ENCODE measurements at regions of chr1 and their contacts with region 1.

Region 1: DNA sequence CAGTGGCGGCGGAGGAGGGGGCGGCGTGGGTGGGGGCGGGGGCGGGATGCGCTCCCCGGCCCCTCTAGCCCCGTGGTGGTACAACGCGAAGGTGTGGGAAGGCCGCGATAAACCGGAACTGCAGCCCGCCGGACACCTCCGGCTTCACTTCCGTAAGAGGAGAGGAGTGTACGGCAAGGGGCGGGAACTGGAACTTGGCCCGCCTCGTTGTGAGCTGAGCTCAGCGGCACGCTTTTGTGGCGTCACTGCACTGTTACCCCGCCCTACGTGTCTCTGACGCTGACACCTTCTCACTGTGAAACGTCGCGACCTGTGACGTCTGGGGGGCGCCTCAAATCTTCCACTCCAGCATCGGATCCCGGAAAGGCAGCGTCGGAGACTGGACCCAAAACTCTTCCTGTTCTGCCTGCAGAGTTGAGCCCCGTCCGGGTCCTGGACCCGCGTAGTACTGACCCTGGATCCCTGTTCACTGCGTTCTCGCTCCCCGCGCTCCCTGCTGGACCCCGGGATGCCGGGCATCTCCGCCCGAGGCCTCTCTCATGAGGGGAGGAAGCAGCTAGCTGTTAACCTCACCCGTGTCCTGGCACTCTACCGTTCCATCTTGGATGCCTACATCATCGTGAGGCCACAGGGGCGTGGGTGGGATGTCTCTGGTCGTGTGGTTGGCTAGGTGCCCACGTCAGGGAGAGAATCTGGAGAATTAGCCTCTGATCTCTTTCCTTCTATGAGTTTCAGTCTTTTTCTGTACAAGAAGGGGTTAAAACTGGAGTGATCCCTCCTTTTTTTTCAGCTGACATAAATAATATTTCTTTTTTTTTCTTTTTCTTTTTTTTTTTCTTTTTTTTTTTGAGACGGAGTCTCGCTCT is at the start of gene ISG20L2:
- DNase-seq: peak; percentile 99
- ATAC-seq: peak; percentile 89
- H3K4me3 Mint-ChIP-seq: no peak within 1 kb of the TSS
- H3K27ac Mint-ChIP-seq: no peak within 1 kb of the TSS
- H3K4me1 Mint-ChIP-seq: peaks cover 29% of the 10 kb centered on the region
- H3K27me3 Mint-ChIP-seq: no peaks in the 10 kb centered on the region
- total RNA-seq, gene ISG20L2: 56.0 to 70.3 TPM

Region 2: DNA sequence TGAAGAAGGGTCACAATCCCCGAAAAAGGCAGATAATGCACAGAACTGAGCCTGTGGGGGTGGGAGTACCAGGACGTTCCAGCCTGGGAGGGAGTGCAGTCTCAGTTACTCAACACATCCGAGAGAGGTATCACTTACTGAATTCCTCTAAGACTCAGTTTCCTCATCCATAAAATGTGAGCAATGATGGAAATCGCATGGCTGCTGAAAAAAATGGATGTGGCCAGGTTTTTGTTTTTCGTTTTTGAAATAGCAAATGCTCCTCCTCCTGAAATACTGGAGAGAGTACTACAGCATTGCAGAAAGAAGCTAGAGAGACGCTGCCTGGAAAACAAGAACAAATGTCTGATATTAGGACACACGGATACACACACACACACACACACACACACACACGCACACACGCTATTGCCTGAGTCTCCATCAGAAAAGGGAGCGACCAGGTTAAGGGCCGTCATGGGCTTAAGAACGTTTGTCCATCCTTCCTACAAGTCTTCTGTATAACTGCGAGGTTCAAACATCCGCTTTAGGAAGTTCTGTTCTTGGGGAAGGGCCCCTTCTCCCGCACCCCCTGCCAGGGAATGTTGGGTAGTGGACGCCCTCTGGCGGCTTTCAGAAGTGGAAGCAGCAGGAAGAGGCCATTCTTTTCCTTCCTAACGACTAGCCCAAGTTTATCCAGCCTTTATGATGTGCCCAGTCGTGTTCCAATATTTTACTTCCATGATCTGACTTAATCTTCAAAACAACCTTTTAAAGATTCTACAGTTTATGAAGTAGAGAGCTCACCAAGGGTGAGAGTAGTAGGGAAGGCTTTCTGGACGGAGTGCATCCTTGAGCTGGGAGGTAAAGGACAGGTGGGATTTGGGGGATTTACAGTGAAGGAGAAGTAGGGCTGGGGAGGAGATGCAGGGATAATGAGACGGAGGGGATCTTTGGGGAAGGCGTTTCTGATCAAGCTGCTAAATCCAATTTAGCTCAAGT is 50.9 kb before region 1 on chr1:
- CTCF ChIA-PET with region 1: interaction called, 12 read pairs
- DNase-seq: no peak
- ATAC-seq: peak; percentile 31
- H3K4me3 Mint-ChIP-seq: no peak overlapping the region
- H3K27ac Mint-ChIP-seq: no peak overlapping the region
- H3K4me1 Mint-ChIP-seq: peaks cover 7% of the 10 kb centered on the region
- H3K27me3 Mint-ChIP-seq: peaks cover 88% of the 10 kb centered on the region

Region 3: DNA sequence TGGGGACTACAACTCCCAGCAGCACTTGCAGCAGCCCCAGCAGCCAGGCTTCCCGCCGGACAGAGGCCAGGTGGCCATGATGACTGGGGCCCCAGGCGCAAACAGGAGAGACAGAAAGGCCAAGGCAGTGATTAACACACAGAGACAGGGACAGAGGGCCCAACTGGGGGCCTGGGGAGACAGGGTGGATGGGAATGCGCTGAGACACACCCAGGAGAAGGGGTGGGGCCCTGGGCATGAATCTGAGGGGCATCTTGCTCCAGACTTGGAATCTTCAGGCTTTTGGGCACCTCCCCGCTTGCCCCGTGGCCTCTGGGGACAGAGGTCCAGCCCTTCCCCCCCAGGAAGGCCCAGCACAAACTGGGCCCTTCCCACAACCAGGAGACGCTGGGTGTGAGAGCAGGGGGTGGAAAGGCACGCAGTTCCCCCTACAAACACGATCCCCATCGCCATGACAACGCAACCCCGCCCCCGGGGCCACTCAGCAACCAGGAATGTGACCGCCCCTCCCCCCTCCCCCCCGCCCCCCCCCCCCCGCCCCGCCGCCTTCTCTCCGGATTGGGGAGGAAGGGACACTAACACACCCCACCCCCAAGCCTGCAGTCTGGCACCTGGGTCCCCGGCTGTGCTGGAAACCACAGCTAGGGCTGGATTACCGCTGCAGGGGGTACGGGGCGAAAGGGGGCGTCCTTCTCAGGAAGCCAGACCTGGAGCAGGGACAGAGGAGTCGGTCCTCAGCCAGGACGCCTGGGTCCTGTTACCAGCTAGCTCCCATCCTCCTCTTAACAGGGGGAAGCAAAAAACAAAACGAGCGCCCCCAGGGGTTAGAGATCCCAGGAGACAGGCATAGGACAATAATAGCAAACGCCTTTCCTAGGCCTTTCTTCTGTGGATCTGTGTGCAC is 18.1 kb after region 1 on chr1:
- CTCF ChIA-PET with region 1: interaction called, 87 read pairs
- DNase-seq: peak; percentile 71
- ATAC-seq: peak; percentile 10
- H3K4me3 Mint-ChIP-seq: peak overlapping the region; percentile 98
- H3K27ac Mint-ChIP-seq: peak overlapping the region; percentile 97
- H3K4me1 Mint-ChIP-seq: peaks cover 72% of the 10 kb centered on the region
- H3K27me3 Mint-ChIP-seq: no peaks in the 10 kb centered on the region

Region 4: DNA sequence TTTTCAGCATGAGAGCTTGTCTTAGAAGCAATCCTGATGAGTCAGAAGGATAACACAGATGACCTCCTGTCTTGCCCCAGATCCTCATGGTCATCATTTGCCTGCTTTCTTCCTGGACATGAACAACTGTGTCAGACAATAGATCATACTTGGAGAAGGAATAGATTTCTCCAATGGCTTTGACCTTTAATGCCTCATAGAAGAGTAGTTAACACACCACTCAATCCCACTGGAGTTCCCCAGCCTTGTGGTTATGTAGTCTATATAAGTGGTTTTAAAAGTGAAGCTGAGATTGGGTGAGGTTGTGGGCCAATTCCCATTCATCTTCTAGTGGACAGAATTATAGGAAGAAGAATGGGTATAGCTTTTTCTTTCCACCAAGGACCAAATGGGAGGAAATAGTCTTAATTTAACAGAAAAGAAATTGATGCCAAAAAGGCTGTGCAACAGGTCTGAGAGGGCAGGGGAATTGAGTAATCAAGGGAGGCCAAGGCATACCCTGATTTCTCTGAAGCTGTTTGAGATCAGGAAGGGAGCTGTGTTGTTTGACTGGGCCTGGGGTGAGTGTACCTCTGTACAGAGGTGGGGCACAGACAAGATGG is 52.9 kb after region 1 on chr1:
- CTCF ChIA-PET with region 1: interaction called, 23 read pairs
- DNase-seq: no peak
- ATAC-seq: no peak
- H3K4me3 Mint-ChIP-seq: no peak overlapping the region
- H3K27ac Mint-ChIP-seq: no peak overlapping the region
- H3K4me1 Mint-ChIP-seq: peaks cover 29% of the 10 kb centered on the region
- H3K27me3 Mint-ChIP-seq: no peaks in the 10 kb centered on the region

Region 5: GRCh38 chr1:156852418-156852874 is 123.6 kb after region 1 on chr1:
- CTCF ChIA-PET with region 1: interaction called, 146 read pairs
- DNase-seq: no peak
- ATAC-seq: no peak
- H3K4me3 Mint-ChIP-seq: no peak overlapping the region
- H3K27ac Mint-ChIP-seq: no peak overlapping the region
- H3K4me1 Mint-ChIP-seq: peaks cover 15% of the 10 kb centered on the region
- H3K27me3 Mint-ChIP-seq: peaks cover 27% of the 10 kb centered on the region